Activated T-helper 2 cell treated with anti-CD3 and anti-CD28 coated beads, Interferon-gamma antibody, Interleukin-2, Interleukin-4, amounts not matched to agents 10 μg/mL and 5 μg/mL and 100 μg/mL, durations not matched to agents 14 hours and 24 hours and 36 hours (primary cell): ENCODE measurements at regions of chr12 and their contacts with region 1.

Region 1: GRCh38 chr12:90013409-90013808 is 304.8 kb upstream of the ATP2B1 start:
- DNase-seq: no peak
- H3K4me3 Mint-ChIP-seq: no peak overlapping the region
- H3K27ac Mint-ChIP-seq: no peak overlapping the region
- H3K4me1 Mint-ChIP-seq: no peaks in the 10 kb centered on the region
- H3K27me3 Mint-ChIP-seq: peaks cover 21% of the 10 kb centered on the region

Region 2: DNA sequence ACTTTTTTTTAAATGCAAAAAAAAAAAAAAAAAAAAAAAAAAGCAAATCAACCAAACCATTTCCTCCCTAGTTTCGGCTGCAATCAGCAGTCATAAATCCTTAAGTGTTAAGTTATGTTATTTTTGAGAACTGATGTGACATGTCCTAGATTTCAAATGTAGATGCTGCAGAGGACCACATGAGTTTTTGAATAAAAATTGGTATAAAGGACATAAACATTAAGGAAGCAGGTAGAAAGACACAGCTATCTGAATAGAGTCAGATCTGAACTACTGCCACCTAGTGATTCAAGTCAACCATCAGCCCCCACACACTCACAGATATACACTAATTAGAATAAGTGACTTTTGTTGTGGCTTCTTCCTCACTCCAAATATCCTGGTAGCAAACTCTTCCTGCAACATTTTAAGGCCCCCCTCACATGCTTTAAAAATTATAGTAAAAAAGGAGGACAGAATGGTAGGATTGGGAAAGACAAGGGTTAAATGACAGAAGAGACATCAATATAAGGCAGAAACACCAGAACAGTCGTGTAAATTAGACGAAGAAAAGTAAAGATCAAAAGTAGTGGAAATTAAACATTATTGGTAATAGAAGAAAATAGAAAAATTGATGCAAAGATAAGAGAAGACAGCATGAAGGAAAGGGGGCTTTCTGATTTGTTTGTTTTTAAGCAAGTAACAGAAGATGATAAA is 89.7 kb after region 1 on chr12:
- intact Hi-C with region 1: loop called (anchors 5 kb)
- DNase-seq: no peak
- H3K4me3 Mint-ChIP-seq: no peak overlapping the region
- H3K27ac Mint-ChIP-seq: no peak overlapping the region
- H3K4me1 Mint-ChIP-seq: peaks cover 9% of the 10 kb centered on the region
- H3K27me3 Mint-ChIP-seq: peaks cover 18% of the 10 kb centered on the region